GM23248 (cell line): ENCODE measurements at regions of chr13 and their contacts with region 1.

Region 1: GRCh38 chr13:31909864-31910551 is 121.6 kb upstream of the FRY start:
- DNase-seq: peak; percentile 81
- H3K4me3 ChIP-seq: no peak overlapping the region
- H3K27ac ChIP-seq: no peak overlapping the region
- H3K4me1 ChIP-seq: peaks cover 30% of the 10 kb centered on the region
- H3K27me3 ChIP-seq: no peaks in the 10 kb centered on the region

Region 2: DNA sequence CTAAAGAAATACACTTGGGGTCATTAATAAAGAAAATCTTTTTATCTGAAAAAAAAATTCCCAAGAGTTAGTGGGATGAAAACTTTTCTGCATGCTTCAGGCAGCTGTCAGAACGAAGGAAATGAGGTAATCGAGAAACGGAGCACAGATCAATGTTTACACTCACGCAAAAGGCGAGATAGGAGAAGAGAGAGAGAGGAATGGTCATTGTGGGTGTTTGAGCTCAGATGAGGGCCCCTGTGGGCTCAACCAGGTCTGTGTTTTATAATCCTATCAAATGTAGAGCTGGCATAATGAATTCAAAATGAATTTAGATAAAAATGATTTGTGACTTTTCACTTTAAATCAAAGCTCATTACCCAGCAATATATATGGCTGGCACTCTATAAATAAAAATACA is 176.9 kb before region 1 on chr13:
- in situ Hi-C with region 1: no loop called
- DNase-seq: no peak
- H3K4me3 ChIP-seq: no peak overlapping the region
- H3K27ac ChIP-seq: no peak overlapping the region
- H3K4me1 ChIP-seq: no peaks in the 10 kb centered on the region
- H3K27me3 ChIP-seq: no peaks in the 10 kb centered on the region

Region 3: GRCh38 chr13:32297206-32297605 is 387.2 kb after region 1 on chr13:
- in situ Hi-C with region 1: loop called (anchors 10 kb)
- DNase-seq: no peak
- H3K4me3 ChIP-seq: no peak overlapping the region
- H3K27ac ChIP-seq: no peak overlapping the region
- H3K4me1 ChIP-seq: no peaks in the 10 kb centered on the region
- H3K27me3 ChIP-seq: no peaks in the 10 kb centered on the region

Region 4: GRCh38 chr13:32863596-32863995 is 953.6 kb after region 1 on chr13:
- in situ Hi-C with region 1: no loop called
- DNase-seq: no peak
- H3K4me3 ChIP-seq: no peak overlapping the region
- H3K27ac ChIP-seq: no peak overlapping the region
- H3K4me1 ChIP-seq: no peaks in the 10 kb centered on the region
- H3K27me3 ChIP-seq: no peaks in the 10 kb centered on the region